ENCODE measurements at regions of chr22 and their contacts with region 1.

Region 1: GRCh38 chr22:46116491-46116958 is 33.8 kb upstream of the PPARA start:
- DNase-seq: peak; percentile 76
- ATAC-seq: peak; percentile 58
- H3K4me3 ChIP-seq: no peak overlapping the region
- H3K27ac ChIP-seq: no peak overlapping the region
- H3K4me1 ChIP-seq: no peaks in the 10 kb centered on the region
- H3K27me3 ChIP-seq: no peaks in the 10 kb centered on the region
- CTCF ChIP-seq: peak; percentile 85

Region 2: DNA sequence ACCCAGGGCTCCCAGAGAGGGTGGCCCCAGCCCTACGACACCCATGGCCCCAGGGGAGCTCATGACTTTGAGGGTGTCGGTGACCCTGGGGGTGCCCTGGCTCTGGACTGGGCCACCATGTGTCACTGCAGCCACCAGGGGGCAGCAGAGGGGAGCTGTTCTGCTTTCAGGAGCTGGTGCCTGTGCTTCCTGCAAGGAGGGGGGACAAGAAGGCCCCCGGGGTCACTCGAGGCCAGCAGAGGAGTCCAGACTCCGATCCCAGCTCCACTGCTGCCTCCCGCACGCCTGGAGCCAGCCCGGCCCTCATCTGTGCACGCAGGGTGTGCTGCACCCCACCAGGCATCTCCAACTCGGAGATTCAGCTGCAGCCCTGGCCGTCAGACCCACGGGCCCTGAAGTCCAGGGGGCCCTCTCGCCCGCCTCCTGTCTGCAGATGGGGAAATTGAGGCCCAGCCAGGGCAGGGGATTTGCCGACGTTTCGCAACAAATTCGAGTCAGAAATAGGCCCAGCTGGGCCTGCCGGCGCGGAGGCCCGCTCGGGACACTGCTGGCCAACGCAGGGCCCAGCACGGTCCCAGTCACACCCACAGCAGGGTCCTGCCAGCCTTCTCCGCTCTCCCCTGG is 110.0 kb before region 1 on chr22:
- CTCF ChIA-PET with region 1: interaction called, 8 read pairs
- POLR2A ChIA-PET with region 1: interaction called, 9 read pairs
- intact Hi-C with region 1: loop called (anchors 2 kb)
- DNase-seq: peak; percentile 85
- ATAC-seq: peak; percentile 63
- H3K4me3 ChIP-seq: peak overlapping the region; percentile 56
- H3K27ac ChIP-seq: peak overlapping the region; percentile 96
- H3K4me1 ChIP-seq: peaks cover 50% of the 10 kb centered on the region
- H3K27me3 ChIP-seq: no peaks in the 10 kb centered on the region
- CTCF ChIP-seq: peak; percentile 85

Region 3: DNA sequence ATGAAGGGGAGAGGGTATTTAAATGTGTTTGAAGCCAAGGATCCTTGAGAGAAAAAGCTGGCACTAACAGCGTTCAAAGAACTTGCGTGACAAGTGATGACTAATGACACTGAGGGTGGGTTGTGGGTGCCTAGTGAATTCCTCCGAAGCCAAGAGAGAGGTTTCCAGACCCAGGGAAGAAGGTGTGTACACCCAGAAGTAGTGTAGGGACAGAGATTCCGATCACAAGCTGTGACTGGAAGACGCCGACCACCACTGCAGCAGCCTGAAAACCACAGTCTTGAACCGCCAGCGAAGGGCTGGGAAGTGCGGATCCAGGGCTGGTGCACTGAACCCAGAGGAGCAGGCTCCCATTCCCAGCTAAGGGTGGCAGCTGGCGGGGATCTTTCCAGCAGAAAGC is 43.3 kb after region 1 on chr22:
- CTCF ChIA-PET with region 1: no interaction called
- POLR2A ChIA-PET with region 1: no interaction called
- intact Hi-C with region 1: no loop called
- DNase-seq: peak; percentile 73
- ATAC-seq: peak; percentile 74
- H3K4me3 ChIP-seq: no peak overlapping the region
- H3K27ac ChIP-seq: peak overlapping the region; percentile 78
- H3K4me1 ChIP-seq: peaks cover 14% of the 10 kb centered on the region
- H3K27me3 ChIP-seq: no peaks in the 10 kb centered on the region
- CTCF ChIP-seq: no peak

Region 4: DNA sequence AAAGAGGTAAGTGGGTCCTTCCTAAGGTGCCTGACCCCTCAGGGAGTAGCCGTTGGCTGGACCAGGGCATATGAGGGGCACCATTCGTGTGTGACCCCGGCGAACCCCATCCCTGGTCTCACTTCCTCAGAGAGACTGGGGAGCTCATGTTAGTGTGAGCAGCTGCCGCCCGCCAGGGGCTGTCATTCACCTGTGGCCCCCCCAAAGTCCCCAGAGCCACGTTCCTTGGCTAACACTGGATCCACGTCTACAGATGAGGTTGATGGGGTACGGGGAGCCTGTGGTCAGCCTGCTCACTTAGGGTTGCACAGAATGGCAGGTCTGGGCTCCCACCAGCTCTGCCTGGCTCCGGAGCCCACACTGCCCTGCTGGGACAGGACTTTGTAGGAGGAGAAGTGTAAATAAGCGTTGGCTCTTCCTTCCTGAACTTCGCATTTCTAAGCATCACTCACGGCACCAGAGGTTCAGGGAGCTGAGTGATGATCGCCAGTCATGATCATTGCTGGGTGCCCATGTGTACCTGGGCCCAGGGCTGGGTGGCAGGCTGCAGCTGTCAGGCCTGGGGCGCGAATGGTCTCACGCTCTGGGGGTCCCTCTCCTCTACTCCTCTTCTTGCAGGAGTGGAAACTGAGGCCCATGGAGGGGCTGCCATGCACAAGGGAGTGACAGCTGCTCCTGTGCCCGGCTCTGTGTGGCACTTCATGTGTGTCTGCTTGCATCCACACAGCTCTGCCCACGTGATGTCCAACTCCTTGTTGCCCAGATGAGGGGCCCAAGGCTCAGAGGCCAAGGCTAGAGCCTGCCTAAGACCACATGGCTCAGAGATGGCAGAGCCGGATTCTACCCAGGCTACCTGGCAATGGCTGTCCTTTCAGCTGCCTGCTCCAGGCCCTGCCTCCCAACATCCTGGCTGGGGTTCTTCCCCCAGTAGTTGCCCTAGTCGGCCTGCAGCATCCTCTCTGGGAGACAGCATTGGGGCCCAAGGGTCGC is 162.4 kb after region 1 on chr22:
- CTCF ChIA-PET with region 1: interaction called, 12 read pairs
- POLR2A ChIA-PET with region 1: no interaction called
- intact Hi-C with region 1: no loop called
- DNase-seq: no peak
- ATAC-seq: no peak
- H3K4me3 ChIP-seq: no peak overlapping the region
- H3K27ac ChIP-seq: no peak overlapping the region
- H3K4me1 ChIP-seq: no peaks in the 10 kb centered on the region
- H3K27me3 ChIP-seq: no peaks in the 10 kb centered on the region
- CTCF ChIP-seq: no peak

Region 5: DNA sequence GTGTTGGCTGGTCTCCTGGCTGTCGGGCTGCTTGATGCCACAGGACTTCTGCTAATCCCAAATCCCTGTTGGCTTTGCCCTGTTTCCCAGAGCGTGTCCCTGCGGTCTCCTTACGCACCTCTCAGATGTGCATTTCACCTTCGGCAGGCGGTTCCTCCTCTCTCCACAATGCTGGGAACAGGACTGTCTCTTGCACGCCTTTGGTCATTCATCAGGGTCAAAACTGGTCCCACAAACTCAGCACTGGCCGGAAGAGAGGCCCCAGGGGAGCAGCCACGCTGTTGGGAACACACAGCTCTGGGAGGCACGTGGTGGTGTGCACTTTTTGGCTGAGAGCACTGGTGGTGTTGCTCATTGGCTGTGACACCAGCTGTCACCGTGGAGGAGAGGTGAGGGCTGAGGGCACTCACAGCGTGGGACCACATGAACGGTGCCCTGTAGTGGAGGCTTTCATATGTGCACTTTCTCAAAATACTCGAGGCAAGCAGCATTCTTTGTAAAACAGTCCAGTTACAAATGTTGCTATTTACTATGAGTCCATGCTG is 203.7 kb after region 1 on chr22:
- CTCF ChIA-PET with region 1: no interaction called
- POLR2A ChIA-PET with region 1: no interaction called
- intact Hi-C with region 1: no loop called
- DNase-seq: no peak
- ATAC-seq: no peak
- H3K4me3 ChIP-seq: no peak overlapping the region
- H3K27ac ChIP-seq: no peak overlapping the region
- H3K4me1 ChIP-seq: no peaks in the 10 kb centered on the region
- H3K27me3 ChIP-seq: no peaks in the 10 kb centered on the region
- CTCF ChIP-seq: no peak

Measured in PC-3 (cell line).